Right cardiac atrium (tissue), 5 donors: ENCODE measurements at regions of chr19 and their contacts with region 1.

Region 1: DNA sequence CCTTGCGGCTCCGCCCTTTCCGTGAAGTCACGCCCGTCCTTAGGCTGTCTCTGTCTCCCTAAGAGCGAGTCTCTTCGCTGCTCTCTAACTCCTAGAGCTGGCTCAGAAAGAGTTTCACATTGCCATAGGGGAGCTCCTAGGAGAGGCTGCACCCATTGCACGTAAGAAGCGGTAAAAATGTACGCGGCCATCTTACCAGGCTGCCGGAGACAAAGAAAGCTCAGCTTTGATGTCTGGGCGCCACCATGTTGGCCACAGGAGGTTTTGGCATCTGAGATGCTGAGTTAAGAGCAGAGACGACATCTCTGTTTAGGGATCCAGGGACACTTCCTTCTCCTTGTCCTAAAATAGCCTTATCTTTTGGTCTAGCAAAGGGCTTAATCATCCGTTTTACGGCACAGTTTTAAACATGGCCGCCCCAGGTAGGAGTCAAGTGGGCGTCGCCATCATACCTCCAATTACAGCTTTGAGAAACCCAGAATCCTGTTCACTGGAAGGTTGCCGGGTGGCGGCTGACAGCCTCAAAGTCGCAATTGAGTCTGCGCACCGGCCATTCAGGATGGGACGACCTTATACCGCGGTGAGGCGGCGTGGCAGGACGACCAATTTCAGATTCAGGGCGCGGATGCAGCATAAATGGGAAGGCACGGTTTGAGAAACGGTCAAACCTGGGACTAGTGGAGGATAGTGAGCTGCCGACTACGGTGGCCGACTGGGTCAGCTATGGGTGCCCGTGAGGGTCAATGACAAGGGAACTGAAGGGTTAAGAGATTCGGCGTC is at the start of gene ZNF793:
- DNase-seq: peak; percentile 79 to 94 (median 93)
- ATAC-seq: peak; percentile 93 to 94
- H3K4me3 ChIP-seq: peak within 1 kb of the TSS; percentile 91
- H3K27ac ChIP-seq: peak within 1 kb of the TSS; percentile 100
- H3K4me1 ChIP-seq: no peaks in the 10 kb centered on the region
- H3K27me3 ChIP-seq: no peaks in the 10 kb centered on the region
- total RNA-seq, gene ZNF793: 6.0 to 9.2 (median 7.1) TPM

Region 2: DNA sequence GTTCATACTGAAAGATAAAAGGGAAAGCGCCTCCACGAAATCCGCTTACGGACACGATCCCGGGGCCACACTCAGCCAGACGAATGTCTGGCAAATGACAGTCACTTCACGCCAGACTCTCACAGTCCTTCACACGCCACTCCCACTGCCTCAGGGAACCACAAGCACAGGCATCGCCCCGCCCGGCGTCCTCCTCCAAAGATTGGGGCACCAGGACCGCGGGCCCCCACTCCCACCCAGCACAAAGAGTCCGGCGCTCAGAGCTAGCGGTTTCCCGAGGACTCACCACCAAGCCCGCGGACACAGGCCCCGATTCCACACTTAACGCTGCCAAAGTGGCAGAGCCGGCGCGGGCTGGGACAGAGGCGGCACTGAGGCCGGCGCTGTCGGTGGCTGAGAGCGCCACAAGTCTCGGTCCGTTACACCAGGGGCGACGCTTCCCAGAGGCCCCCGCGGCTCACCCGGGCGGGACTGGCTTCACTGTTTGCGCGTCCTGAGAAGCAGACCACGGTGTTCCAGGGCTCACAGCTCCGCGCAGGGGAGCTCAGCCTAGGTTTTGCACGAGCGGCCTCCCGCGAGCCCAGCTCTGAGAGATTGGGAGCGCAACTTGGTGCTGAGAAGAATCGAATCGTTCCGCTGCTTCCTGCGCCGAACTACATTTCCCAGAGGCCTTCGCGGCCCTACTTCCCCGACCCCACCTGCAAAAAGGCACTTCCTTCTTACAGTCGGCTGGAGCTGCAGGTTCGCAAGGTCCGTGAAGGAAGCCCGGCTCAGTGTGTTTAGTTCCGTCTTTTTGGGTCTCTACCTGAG is 39.6 kb before region 1 on chr19 and contains the start of gene ZNF569:
- intact Hi-C with region 1: loop called in 1 of 4 experiments (anchors 5 kb)
- DNase-seq: peak; percentile 90 to 96 (median 94)
- ATAC-seq: peak; percentile 88 to 89
- H3K4me3 ChIP-seq: peak within 1 kb of the TSS; percentile 77
- H3K27ac ChIP-seq: peak within 1 kb of the TSS; percentile 95
- H3K4me1 ChIP-seq: no peaks in the 10 kb centered on the region
- H3K27me3 ChIP-seq: no peaks in the 10 kb centered on the region
- total RNA-seq, gene ZNF569: 4.7 to 7.9 (median 6.6) TPM